ENCODE measurements at regions of chr4 and their contacts with region 1.

Region 1: DNA sequence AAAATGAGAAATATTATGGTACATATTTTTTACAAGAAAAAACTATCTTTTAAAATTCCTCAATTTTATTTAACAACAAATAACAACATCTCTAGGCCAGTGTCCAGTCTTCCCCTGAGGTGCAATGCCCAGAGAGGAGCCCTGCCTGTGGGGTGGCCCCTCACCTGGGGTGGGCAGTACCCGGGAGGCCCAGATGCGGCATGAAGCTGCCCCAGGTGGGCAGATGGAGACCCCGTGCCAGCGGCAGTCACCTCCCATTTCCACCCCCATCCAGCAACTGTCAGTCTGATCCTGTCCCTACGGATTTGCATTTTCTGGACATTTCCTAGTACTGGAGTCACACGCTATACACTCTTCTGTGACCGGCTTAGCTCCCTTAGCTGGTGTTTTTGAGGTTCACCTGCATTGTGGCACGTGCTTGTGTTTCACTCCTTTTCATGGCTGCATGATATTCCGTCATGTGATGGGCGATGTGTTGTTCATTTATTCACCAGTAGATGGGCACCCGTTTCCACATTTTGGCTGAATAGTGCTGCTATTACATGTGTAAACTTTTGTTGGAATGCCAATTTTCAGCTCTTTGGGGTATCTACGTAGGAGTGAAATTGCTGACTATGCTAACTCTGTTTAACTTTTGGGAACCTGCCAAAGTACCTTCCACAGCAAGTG is 11.9 kb upstream of the MAEA start:
- DNase-seq: no peak
- H3K4me3 ChIP-seq: no peak overlapping the region
- H3K27ac ChIP-seq: no peak overlapping the region
- H3K4me1 ChIP-seq: no peaks in the 10 kb centered on the region
- H3K27me3 ChIP-seq: no peaks in the 10 kb centered on the region
- CTCF ChIP-seq: no peak
- POLR2A ChIP-seq: no peak

Region 2: GRCh38 chr4:1321486-1321885 is 43.7 kb after region 1 on chr4:
- intact Hi-C with region 1: loop called (anchors 2 kb)
- DNase-seq: no peak
- H3K4me3 ChIP-seq: no peak overlapping the region
- H3K27ac ChIP-seq: no peak overlapping the region
- H3K4me1 ChIP-seq: no peaks in the 10 kb centered on the region
- H3K27me3 ChIP-seq: no peaks in the 10 kb centered on the region
- CTCF ChIP-seq: no peak
- POLR2A ChIP-seq: no peak